Ovary (tissue), 10 donors: ENCODE measurements at regions of chr15 and their contacts with region 1.

Region 1: DNA sequence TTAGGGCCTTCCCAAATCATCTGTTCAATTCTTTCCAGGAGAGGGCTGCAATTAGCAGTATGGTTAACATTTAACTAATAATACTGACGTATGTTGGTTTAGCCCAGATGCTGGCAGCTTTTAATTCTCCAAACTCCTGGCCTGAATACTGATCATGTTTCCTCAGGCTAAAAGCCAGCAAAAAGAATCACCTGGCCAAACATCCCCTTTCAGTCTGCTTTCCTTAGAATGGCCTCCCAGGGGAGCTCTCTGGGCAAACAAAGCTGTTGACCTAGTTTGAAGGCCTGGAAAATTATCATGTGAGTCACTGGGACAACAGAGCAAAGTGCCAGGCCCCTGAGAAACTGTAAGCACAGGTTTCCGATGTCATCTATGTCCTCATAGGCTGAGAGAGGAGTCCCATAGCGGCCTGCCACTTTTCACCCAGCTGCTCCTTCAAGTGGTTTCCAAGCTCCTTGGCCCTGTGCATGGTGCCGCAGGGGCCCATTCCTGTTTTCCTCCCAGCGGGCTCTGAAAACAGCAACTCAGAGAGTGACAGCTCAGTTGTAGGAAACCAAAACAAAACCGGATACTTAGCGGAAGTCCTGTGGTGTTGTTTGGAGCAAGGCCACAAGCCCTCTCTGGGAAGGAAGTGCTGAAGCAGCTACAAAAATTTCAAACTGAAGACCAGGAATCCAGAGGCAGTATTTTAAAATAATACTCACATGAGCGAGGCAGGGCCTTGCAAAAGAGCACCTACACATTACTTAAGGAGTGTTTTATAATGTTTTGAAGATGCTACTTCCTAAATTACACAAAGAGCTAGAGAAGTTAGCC is 36.5 kb upstream of the RAB11A start:
- DNase-seq: peak; percentile 78 to 93 (median 88)
- H3K4me3 ChIP-seq: peak overlapping the region; percentile 30
- H3K27ac ChIP-seq: peak overlapping the region; percentile 37 to 84
- H3K4me1 ChIP-seq: peaks cover 10% of the 10 kb centered on the region
- H3K27me3 ChIP-seq: no peaks in the 10 kb centered on the region
- CTCF ChIP-seq: peak in 1 of 3 donors; percentile 26
- EP300 ChIP-seq: no peak
- POLR2A ChIP-seq: no peak

Region 2: DNA sequence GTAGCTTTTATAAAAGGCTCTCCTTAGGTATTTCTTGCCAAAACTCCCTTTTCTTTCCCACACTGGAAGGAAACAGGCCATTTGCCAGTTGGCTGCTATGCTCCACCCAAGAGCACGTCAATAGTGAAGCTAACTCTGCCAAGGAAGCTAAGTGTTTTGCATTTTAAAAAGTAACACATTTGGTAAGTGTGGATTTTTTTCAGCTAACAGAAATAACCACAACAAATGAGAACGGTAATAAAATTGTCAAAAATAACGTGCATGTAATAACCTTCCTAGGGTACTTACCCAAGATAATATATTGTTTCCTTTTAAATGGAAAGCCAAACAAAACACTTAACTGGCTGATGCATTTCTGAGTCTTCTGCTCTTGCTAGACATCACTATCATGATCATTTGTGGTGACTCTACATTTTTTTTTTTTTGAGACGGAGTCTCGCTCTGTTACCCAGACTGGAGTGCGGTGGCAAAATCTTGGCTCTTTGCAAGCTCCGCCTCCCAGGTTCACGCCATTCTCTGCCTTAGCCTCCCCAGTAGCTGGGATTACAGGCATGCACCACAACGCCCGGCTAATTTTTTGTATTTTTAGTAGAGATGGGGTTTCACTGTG is 319.8 kb before region 1 on chr15:
- intact Hi-C with region 1: no loop called
- DNase-seq: peak; percentile 80 to 89 (median 84)
- H3K4me3 ChIP-seq: peak overlapping the region; percentile 24
- H3K27ac ChIP-seq: peak overlapping the region; percentile 36 to 71
- H3K4me1 ChIP-seq: peaks cover 12% of the 10 kb centered on the region
- H3K27me3 ChIP-seq: no peaks in the 10 kb centered on the region
- CTCF ChIP-seq: no peak
- EP300 ChIP-seq: no peak
- POLR2A ChIP-seq: no peak

Region 3: GRCh38 chr15:65792130-65792987 is 40.4 kb before region 1 on chr15 and contains the start of gene DENND4A:
- intact Hi-C with region 1: loop called in 2 of 4 experiments (anchors 5 kb)
- DNase-seq: peak; percentile 98 to 99 (median 98)
- H3K4me3 ChIP-seq: peak within 1 kb of the TSS; percentile 95
- H3K27ac ChIP-seq: peak within 1 kb of the TSS; percentile 98 to 99
- H3K4me1 ChIP-seq: peaks cover 4% of the 10 kb centered on the region
- H3K27me3 ChIP-seq: no peaks in the 10 kb centered on the region
- CTCF ChIP-seq: no peak
- EP300 ChIP-seq: peak; percentile 36
- POLR2A ChIP-seq: peak; percentile 84
- total RNA-seq, gene DENND4A: 40.0 to 63.9 (median 53.5) TPM

Region 4: GRCh38 chr15:65869127-65869953 is 36.6 kb after region 1 on chr15 and contains the start of gene RAB11A:
- intact Hi-C with region 1: loop called in 1 of 4 experiments (anchors 2 kb)
- DNase-seq: peak; percentile 95 to 96 (median 95)
- H3K4me3 ChIP-seq: peak within 1 kb of the TSS; percentile 96
- H3K27ac ChIP-seq: peak within 1 kb of the TSS; percentile 91 to 96
- H3K4me1 ChIP-seq: peaks cover 2% of the 10 kb centered on the region
- H3K27me3 ChIP-seq: no peaks in the 10 kb centered on the region
- CTCF ChIP-seq: peak in 2 of 3 donors; percentile 59 to 66
- EP300 ChIP-seq: peak; percentile 67
- POLR2A ChIP-seq: peak; percentile 91
- total RNA-seq, gene RAB11A: 47.0 to 163 (median 139) TPM

Region 5: GRCh38 chr15:66293419-66294156 is 460.8 kb after region 1 on chr15 and contains the start of gene DIS3L:
- intact Hi-C with region 1: loop called in 1 of 4 experiments (anchors 5 kb)
- DNase-seq: peak; percentile 46 to 72 (median 56)
- H3K4me3 ChIP-seq: peak within 1 kb of the TSS; percentile 65
- H3K27ac ChIP-seq: peak within 1 kb of the TSS; percentile 87 to 95
- H3K4me1 ChIP-seq: peaks cover 5% of the 10 kb centered on the region
- H3K27me3 ChIP-seq: no peaks in the 10 kb centered on the region
- CTCF ChIP-seq: no peak
- EP300 ChIP-seq: no peak
- POLR2A ChIP-seq: no peak
- total RNA-seq, gene DIS3L: 23.4 to 39.6 (median 31.9) TPM